Transverse colon (tissue), 4 donors: ENCODE measurements at regions of chr2 and their contacts with region 1.

Region 1: DNA sequence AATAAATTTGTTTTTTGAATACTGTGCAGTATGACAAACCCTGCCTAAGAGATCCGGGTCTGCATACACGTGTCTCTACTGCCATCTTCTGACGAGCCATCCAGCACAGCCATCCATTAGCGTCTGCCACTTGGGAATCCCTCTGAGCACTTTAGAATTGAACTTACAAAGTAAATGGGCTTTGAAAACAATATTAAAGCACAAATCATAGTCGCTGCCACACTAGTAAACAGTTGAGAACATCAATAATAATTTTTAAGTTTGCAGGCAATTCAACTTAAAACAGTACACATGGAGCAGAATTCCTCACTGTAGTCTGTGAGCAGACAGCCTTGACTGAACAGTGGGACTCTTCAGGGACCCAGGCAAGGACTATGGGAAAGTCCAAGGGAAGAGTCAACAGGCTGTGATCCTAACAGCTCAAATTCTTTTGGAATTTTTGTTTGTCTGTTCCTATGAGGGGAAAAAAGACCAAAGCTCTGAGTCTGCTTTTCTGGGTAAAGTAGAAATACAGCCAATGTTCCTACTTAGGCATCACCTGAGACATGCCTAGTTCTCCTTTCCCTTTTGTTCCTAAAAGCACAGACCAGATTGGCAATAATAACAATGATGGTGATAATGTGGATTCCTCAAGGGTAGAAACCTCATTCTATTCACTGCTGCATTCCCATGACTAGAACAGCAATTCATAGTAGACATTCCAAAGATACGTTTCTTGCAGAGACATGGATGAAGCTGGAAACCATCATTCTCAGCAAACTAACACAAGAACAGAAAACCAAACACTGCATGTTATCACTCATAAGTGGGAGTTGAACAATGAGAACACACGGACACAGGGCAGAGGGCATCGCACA is 92.9 kb downstream of the MREG start:
- DNase-seq: peak; percentile 72
- H3K4me3 ChIP-seq: no peak overlapping the region
- H3K27ac ChIP-seq: peak overlapping the region in 1 of 4 donors; percentile 37
- H3K4me1 ChIP-seq: peaks cover 0 to 19% (median 9%) of the 10 kb centered on the region in 4 donors
- H3K27me3 ChIP-seq: no peaks in the 10 kb centered on the region
- CTCF ChIP-seq: peak; percentile 65 to 79 (median 71)
- EP300 ChIP-seq: no peak
- POLR2A ChIP-seq: no peak

Region 2: GRCh38 chr2:215430528-215431187 is 489.8 kb before region 1 on chr2:
- in situ Hi-C with region 1: no loop called
- intact Hi-C with region 1: loop called (anchors 5 kb)
- DNase-seq: no peak
- H3K4me3 ChIP-seq: no peak overlapping the region
- H3K27ac ChIP-seq: peak overlapping the region; percentile 86 to 94 (median 88)
- H3K4me1 ChIP-seq: peaks cover 0 to 6% (median 2%) of the 10 kb centered on the region in 4 donors
- H3K27me3 ChIP-seq: peaks cover 18% of the 10 kb centered on the region
- CTCF ChIP-seq: no peak
- EP300 ChIP-seq: no peak
- POLR2A ChIP-seq: no peak

Region 3: GRCh38 chr2:215454519-215455246 is 465.8 kb before region 1 on chr2:
- in situ Hi-C with region 1: loop called (anchors 5 to 10 kb)
- intact Hi-C with region 1: loop called (anchors 5 kb)
- DNase-seq: no peak
- H3K4me3 ChIP-seq: no peak overlapping the region
- H3K27ac ChIP-seq: no peak overlapping the region
- H3K4me1 ChIP-seq: no peaks in the 10 kb centered on the region
- H3K27me3 ChIP-seq: no peaks in the 10 kb centered on the region
- CTCF ChIP-seq: peak; percentile 72 to 84 (median 73)
- EP300 ChIP-seq: no peak
- POLR2A ChIP-seq: no peak